Heart left ventricle (tissue), 16 donors: ENCODE measurements at regions of chr5 and their contacts with region 1.

Region 1: GRCh38 chr5:4295663-4296339 is 700.2 kb downstream of the IRX1 start:
- DNase-seq: no peak
- ATAC-seq: peak in 2 of 4 donors; percentile 24 to 38
- H3K4me3 ChIP-seq: no peak overlapping the region
- H3K27ac ChIP-seq: no peak overlapping the region
- H3K4me1 ChIP-seq: no peaks in the 10 kb centered on the region
- H3K27me3 ChIP-seq: peaks cover 0 to 6% (median 0%) of the 10 kb centered on the region in 9 donors
- CTCF ChIP-seq: peak in 11 of 12 donors; percentile 23 to 63 (median 49)
- POLR2A ChIP-seq: no peak

Region 2: GRCh38 chr5:3612591-3613042 is 683.2 kb before region 1 on chr5:
- intact Hi-C with region 1: loop called in 1 of 10 experiments (anchors 10 kb)
- DNase-seq: no peak
- ATAC-seq: no peak
- H3K4me3 ChIP-seq: no peak overlapping the region
- H3K27ac ChIP-seq: no peak overlapping the region
- H3K4me1 ChIP-seq: no peaks in the 10 kb centered on the region
- H3K27me3 ChIP-seq: peaks cover 0 to 64% (median 7%) of the 10 kb centered on the region in 9 donors
- CTCF ChIP-seq: no peak
- POLR2A ChIP-seq: no peak